Dendritic cell treated with granulocyte-macrophage colony-stimulating factor and Interleukin-4, amounts not matched to agents 40 ng/mL and 50 ng/mL, for 4 days (primary cell): ENCODE measurements at regions of chr10 and their contacts with region 1.

Region 1: GRCh38 chr10:14604181-14605142 is 170.2 kb downstream of the FAM107B start:
- H3K4me3 Mint-ChIP-seq: peak overlapping the region; percentile 90
- H3K27ac Mint-ChIP-seq: peak overlapping the region; percentile 94
- H3K4me1 Mint-ChIP-seq: peaks cover 58% of the 10 kb centered on the region
- H3K27me3 Mint-ChIP-seq: peaks cover 5% of the 10 kb centered on the region

Region 2: GRCh38 chr10:14560274-14560673 is 44.2 kb before region 1 on chr10:
- intact Hi-C with region 1: loop called (anchors 5 kb)
- H3K4me3 Mint-ChIP-seq: peak overlapping the region; percentile 70
- H3K27ac Mint-ChIP-seq: peak overlapping the region; percentile 97
- H3K4me1 Mint-ChIP-seq: peaks cover 86% of the 10 kb centered on the region
- H3K27me3 Mint-ChIP-seq: no peaks in the 10 kb centered on the region

Region 3: GRCh38 chr10:14625192-14625631 is 20.8 kb after region 1 on chr10:
- intact Hi-C with region 1: no loop called
- H3K4me3 Mint-ChIP-seq: no peak overlapping the region
- H3K27ac Mint-ChIP-seq: no peak overlapping the region
- H3K4me1 Mint-ChIP-seq: peaks cover 26% of the 10 kb centered on the region
- H3K27me3 Mint-ChIP-seq: no peaks in the 10 kb centered on the region

Region 4: DNA sequence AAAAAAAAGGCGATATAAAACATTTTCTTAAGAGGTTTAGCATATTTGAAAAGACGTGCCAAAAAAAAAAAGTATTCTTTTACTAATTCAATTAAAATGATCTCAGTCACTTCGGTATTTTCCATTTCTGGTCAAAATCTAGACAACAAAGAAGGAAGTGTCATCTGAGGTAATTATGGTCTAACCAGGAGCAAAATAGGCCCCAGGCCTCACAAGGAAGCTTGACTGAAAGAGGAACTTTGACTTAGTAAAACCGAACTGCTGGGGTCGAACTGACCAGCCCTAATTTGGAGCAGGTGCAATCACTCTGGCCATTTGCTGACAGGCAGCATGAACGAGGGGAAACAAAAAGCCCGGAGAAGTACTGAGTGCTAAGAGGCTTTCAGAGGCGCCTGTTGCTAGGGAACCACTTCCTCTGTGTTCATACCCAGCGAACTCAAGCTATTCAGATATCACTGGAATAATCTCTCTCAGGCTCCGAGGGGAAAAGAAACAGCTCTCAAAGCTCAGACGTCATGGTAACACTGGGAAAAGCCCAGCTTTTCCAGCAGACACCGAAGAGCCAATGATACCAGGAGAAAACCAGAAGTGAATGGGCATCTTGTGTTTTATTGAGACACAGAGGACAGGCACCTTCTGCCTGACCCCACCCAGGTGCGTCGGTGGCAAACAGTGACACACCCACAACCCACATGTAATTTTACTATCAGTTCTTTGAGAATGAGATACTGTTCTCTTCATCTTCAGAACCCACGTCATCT is 43.7 kb after region 1 on chr10:
- intact Hi-C with region 1: loop called (anchors 1 kb)
- H3K4me3 Mint-ChIP-seq: peak overlapping the region; percentile 45
- H3K27ac Mint-ChIP-seq: peak overlapping the region; percentile 78
- H3K4me1 Mint-ChIP-seq: peaks cover 15% of the 10 kb centered on the region
- H3K27me3 Mint-ChIP-seq: no peaks in the 10 kb centered on the region

Region 5: GRCh38 chr10:14878266-14879054 is 274.0 kb after region 1 on chr10 and contains the start of gene SUV39H2:
- intact Hi-C with region 1: loop called (anchors 2 kb)
- H3K4me3 Mint-ChIP-seq: peak within 1 kb of the TSS; percentile 97
- H3K27ac Mint-ChIP-seq: peak within 1 kb of the TSS; percentile 94
- H3K4me1 Mint-ChIP-seq: peaks cover 41% of the 10 kb centered on the region
- H3K27me3 Mint-ChIP-seq: no peaks in the 10 kb centered on the region